Left lung (tissue), 14 donors: ENCODE measurements at regions of chr4 and their contacts with region 1.

Region 1: GRCh38 chr4:73019462-73020047 is 50.0 kb downstream of the COX18 start:
- DNase-seq: peak in 2 of 4 donors; percentile 27 to 49
- ATAC-seq: peak; percentile 57
- H3K4me3 ChIP-seq: no peak overlapping the region
- H3K27ac ChIP-seq: no peak overlapping the region
- H3K4me1 ChIP-seq: no peaks in the 10 kb centered on the region
- H3K27me3 ChIP-seq: no peaks in the 10 kb centered on the region
- CTCF ChIP-seq: peak; percentile 63 to 67

Region 2: GRCh38 chr4:72326692-72327632 is 692.6 kb before region 1 on chr4:
- intact Hi-C with region 1: loop called in 1 of 2 experiments (anchors 5 kb)
- DNase-seq: peak in 1 of 4 donors; percentile 15
- ATAC-seq: peak; percentile 60
- H3K4me3 ChIP-seq: no peak overlapping the region
- H3K27ac ChIP-seq: no peak overlapping the region
- H3K4me1 ChIP-seq: no peaks in the 10 kb centered on the region
- H3K27me3 ChIP-seq: no peaks in the 10 kb centered on the region
- CTCF ChIP-seq: peak in 1 of 2 donors; percentile 61

Region 3: GRCh38 chr4:72505314-72505744 is 514.2 kb before region 1 on chr4:
- intact Hi-C with region 1: loop called in 1 of 2 experiments (anchors 10 kb)
- DNase-seq: peak in 2 of 4 donors; percentile 34 to 51
- ATAC-seq: peak; percentile 98
- H3K4me3 ChIP-seq: no peak overlapping the region
- H3K27ac ChIP-seq: no peak overlapping the region
- H3K4me1 ChIP-seq: no peaks in the 10 kb centered on the region
- H3K27me3 ChIP-seq: no peaks in the 10 kb centered on the region
- CTCF ChIP-seq: peak; percentile 42 to 72

Region 4: DNA sequence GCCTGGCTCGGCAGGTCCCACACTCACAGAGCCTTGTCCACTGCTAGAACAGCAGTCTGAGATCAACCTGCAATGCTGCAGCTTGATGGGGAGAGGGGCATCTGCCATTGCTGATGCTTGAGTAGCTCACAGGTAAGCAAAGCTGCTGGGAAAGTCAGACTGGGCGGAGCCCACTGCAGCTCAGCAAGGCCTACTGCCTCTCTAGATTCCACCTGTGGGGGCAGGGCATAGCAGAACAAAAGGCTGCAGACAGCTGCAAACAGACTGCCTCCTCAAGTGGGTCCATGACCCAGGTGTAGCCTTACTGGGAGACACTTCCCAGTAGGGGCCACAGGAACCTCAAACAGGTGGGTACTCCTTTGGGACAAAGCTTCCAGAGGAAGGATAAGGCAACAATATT is 339.9 kb before region 1 on chr4:
- intact Hi-C with region 1: no loop called
- DNase-seq: no peak
- ATAC-seq: no peak
- H3K4me3 ChIP-seq: no peak overlapping the region
- H3K27ac ChIP-seq: no peak overlapping the region
- H3K4me1 ChIP-seq: no peaks in the 10 kb centered on the region
- H3K27me3 ChIP-seq: no peaks in the 10 kb centered on the region
- CTCF ChIP-seq: no peak

Region 5: GRCh38 chr4:72701987-72702819 is 317.4 kb before region 1 on chr4:
- intact Hi-C with region 1: loop called in 1 of 2 experiments (anchors 5 kb)
- DNase-seq: peak in 2 of 4 donors; percentile 22 to 44
- ATAC-seq: peak; percentile 97
- H3K4me3 ChIP-seq: peak overlapping the region; percentile 16 to 18
- H3K27ac ChIP-seq: no peak overlapping the region
- H3K4me1 ChIP-seq: no peaks in the 10 kb centered on the region
- H3K27me3 ChIP-seq: no peaks in the 10 kb centered on the region
- CTCF ChIP-seq: peak; percentile 31 to 40

Region 6: DNA sequence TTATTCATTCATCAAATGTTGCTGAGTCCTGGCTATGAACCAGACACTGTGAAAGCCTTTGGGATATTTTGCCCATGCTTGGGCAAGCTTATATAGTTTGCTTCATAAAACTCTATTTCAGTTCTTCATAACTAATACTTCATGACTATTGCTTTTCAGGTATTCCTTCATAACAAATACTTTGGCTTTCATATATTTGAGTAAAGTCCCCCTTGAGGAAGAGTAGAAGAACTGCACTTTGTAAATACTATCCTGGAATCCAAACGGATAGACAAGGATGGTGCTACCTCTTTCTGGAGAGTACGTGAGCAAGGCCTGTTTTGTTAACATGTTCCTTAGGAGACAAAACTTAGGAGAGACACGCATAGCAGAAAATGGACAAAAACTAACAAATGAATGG is 414.8 kb after region 1 on chr4:
- intact Hi-C with region 1: no loop called
- DNase-seq: no peak
- ATAC-seq: no peak
- H3K4me3 ChIP-seq: no peak overlapping the region
- H3K27ac ChIP-seq: no peak overlapping the region
- H3K4me1 ChIP-seq: no peaks in the 10 kb centered on the region
- H3K27me3 ChIP-seq: no peaks in the 10 kb centered on the region
- CTCF ChIP-seq: peak; percentile 12 to 32